Activated B cell treated with CpG ODN at 0.5 μM for 24 hours (primary cell): ENCODE measurements at regions of chr19 and their contacts with region 1.

Region 1: DNA sequence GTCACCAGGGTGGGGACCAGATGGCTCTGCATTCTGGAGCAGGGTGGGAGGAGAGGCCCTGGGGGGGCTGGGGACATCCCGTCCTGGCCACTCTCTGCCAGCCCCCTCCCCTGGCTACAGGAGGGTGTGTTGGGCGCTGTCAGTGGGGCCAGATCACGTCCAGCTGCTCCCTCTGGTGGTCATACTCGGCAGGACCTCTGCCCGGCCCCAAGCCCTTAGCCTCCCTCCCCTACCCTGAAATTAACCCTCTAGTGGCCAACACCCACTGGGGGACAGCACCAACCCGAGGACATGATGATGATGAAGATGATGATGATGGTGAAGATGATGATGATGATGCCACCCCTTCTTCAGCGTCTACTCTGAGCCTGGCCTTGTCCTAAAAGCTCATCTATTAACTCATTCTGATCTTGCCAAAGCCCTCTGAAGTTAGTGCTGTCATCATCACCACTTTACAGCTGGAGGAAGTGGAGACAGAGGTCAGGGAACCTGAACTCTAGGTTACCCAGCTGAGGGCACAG is 590 bp upstream of the LGI4 start:
- DNase-seq: peak; percentile 63
- ATAC-seq: peak; percentile 90
- H3K4me3 Mint-ChIP-seq: no peak overlapping the region
- H3K27ac Mint-ChIP-seq: no peak overlapping the region
- H3K4me1 Mint-ChIP-seq: peaks cover 15% of the 10 kb centered on the region
- H3K27me3 Mint-ChIP-seq: no peaks in the 10 kb centered on the region
- CTCF ChIP-seq: peak; percentile 75

Region 2: GRCh38 chr19:35114353-35115176 is 20.9 kb before region 1 on chr19:
- CTCF ChIA-PET with region 1: no interaction called
- POLR2A ChIA-PET with region 1: no interaction called
- intact Hi-C with region 1: loop called (anchors 1 kb)
- DNase-seq: peak; percentile 75
- ATAC-seq: peak; percentile 89
- H3K4me3 Mint-ChIP-seq: no peak overlapping the region
- H3K27ac Mint-ChIP-seq: no peak overlapping the region
- H3K4me1 Mint-ChIP-seq: peaks cover 4% of the 10 kb centered on the region
- H3K27me3 Mint-ChIP-seq: peaks cover 7% of the 10 kb centered on the region
- CTCF ChIP-seq: peak; percentile 49